ENCODE measurements at regions of chr16 and their contacts with region 1.

Region 1: DNA sequence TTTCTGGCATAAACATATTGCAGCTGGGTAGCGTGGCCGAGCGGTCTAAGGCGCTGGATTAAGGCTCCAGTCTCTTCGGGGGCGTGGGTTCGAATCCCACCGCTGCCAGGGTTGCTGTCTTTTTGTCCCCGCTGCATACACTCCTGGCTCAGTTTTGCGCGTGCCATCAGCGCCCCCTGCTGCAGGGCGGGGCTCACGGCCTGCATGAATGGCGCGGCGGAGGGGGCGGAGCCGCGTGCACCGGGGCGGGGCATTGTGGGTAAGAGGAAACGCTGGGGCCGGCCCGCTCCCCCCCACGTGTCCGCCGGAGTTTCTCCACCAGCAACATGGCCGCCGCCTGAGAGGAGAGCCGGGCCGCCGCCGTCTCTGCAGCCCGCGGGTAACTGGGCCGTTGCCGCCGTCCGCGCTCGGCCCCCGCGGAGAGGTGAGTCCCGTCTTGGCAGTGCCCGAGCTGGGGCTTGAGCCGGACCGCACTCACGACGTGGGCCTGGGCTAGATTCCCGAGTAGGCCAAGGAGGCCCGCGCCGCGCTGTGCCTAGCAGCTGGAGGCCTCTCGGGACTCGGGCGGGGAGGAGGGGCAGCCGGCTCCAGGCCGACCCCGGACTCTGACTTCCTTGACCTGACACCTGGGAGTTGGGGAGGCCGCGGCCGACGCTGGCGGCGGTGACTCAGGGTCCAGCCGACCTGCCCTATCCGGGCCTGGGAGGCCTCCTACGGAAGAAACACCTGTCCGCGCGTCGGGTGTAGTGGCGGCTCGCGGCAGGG is at the start of gene POLR3E:
- DNase-seq: peak; percentile 99 to 100
- H3K4me3 ChIP-seq: peak within 1 kb of the TSS; percentile 23 to 77 (median 66)
- H3K27ac ChIP-seq: peak within 1 kb of the TSS; percentile 79 to 93 (median 92)
- H3K4me1 ChIP-seq: peaks cover 2 to 5% of the 10 kb centered on the region in 2 donors
- H3K27me3 ChIP-seq: no peaks in the 10 kb centered on the region
- CTCF ChIP-seq: peak; percentile 72 to 99 (median 92)
- POLR2A ChIP-seq: peak in 1 of 2 donors; percentile 91
- total RNA-seq, gene POLR3E: 66.7 to 115 (median 82.8) TPM

Region 2: GRCh38 chr16:21608639-21609328 is 688.5 kb before region 1 on chr16:
- intact Hi-C with region 1: no loop called
- DNase-seq: no peak
- H3K4me3 ChIP-seq: no peak overlapping the region
- H3K27ac ChIP-seq: no peak overlapping the region
- H3K4me1 ChIP-seq: peaks cover 54 to 70% of the 10 kb centered on the region in 2 donors
- H3K27me3 ChIP-seq: no peaks in the 10 kb centered on the region
- CTCF ChIP-seq: no peak
- POLR2A ChIP-seq: no peak

Region 3: GRCh38 chr16:22007509-22008214 is 289.6 kb before region 1 on chr16 and contains the start of gene MOSMO:
- intact Hi-C with region 1: loop called (anchors 5 kb)
- DNase-seq: peak; percentile 72 to 75
- H3K4me3 ChIP-seq: peak within 1 kb of the TSS; percentile 79 to 96 (median 86)
- H3K27ac ChIP-seq: peak within 1 kb of the TSS; percentile 35 to 70 (median 63)
- H3K4me1 ChIP-seq: peaks cover 15 to 16% of the 10 kb centered on the region in 2 donors
- H3K27me3 ChIP-seq: no peaks in the 10 kb centered on the region
- CTCF ChIP-seq: no peak
- POLR2A ChIP-seq: peak in 1 of 2 donors; percentile 60
- total RNA-seq, gene MOSMO: 13.8 to 39.8 (median 28.1) TPM

Region 4: DNA sequence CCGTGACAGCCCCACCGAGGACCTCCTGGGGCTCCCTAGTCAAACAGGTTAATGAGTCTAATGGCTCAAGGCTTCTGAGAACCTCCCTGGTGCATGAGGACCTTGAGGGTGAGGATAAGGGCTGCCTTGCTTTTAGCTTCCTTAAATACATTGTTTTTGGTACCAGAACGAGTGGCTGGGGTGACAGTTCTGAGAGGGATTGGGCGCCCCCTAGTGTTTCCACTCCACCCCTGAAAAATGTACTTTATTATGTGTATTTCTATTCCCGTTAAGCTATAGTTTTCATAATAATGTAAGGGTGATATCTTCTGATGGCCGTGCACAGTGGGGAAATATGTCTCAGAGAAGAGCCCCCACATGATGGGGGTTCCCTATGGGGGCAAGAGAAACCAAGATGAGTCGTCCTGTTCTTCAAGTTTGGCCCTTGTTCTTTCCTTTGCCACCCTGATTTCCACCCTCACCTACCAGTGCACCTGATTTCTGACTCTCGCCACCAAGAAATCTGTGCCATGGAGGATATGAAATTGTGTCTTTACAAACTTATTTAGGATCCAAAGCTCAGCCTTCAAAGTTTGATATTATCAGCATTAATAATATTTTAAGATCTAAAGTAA is 219.5 kb before region 1 on chr16:
- intact Hi-C with region 1: loop called (anchors 5 kb)
- DNase-seq: peak; percentile 65
- H3K4me3 ChIP-seq: no peak overlapping the region
- H3K27ac ChIP-seq: no peak overlapping the region
- H3K4me1 ChIP-seq: peaks cover 5 to 9% of the 10 kb centered on the region in 2 donors
- H3K27me3 ChIP-seq: no peaks in the 10 kb centered on the region
- CTCF ChIP-seq: peak; percentile 59 to 86 (median 68)
- POLR2A ChIP-seq: no peak

Region 5: GRCh38 chr16:22206013-22206841 is 91.1 kb before region 1 on chr16 and contains the start of gene EEF2K:
- intact Hi-C with region 1: loop called (anchors 5 kb)
- DNase-seq: peak; percentile 94 to 95
- H3K4me3 ChIP-seq: peak within 1 kb of the TSS; percentile 42 to 82 (median 81)
- H3K27ac ChIP-seq: peak within 1 kb of the TSS; percentile 64 to 89 (median 88)
- H3K4me1 ChIP-seq: peaks cover 11 to 44% of the 10 kb centered on the region in 2 donors
- H3K27me3 ChIP-seq: no peaks in the 10 kb centered on the region
- CTCF ChIP-seq: peak; percentile 59 to 94 (median 78)
- POLR2A ChIP-seq: peak in 1 of 2 donors; percentile 61
- total RNA-seq, gene EEF2K: 15.6 to 21.3 (median 19.9) TPM